ENCODE measurements at regions of chr1 and their contacts with region 1.

Region 1: DNA sequence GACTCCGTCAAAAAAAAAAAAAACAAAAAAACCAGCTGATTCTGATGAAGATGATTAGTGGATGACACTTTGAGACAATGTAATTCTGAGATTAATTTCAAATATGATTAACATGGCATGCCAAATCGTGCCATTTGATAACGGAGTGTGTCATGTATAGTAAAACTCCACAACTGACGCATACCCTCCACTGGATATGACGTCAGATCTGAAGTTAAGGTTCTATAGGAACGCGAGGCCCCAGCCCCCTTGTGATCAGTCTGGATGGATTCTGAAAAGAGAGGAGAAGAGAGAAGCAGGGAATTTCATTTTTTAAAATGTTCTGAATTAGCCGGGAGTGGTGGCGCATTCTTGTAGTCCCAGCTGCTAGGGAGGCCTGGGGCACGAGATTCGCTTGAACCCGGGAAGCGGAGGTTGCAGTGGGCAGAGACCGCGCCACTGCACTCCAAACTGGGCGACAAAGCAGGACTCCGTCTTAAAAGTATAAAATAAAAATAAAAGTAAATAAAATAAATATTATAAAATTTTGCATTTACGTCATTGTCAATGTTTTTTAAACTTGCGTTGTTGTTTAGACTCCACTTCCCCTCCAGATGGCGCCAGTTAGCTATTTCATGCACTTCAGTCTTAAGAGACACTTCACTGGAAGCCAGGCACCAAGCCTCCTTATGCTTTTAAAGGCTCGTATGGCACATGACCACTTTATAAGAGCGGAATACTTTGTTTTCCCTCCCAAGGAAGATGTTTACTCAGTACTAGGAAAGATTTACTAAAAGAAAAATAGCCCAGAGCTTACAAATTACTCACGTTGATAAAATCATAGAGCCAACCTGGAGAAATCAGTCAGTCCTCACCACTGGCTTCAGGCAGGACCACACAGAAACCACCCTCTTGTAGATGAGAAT is 65.5 kb downstream of the UBE2U start:
- DNase-seq: peak in 1 of 2 experiments; percentile 70
- H3K4me3 ChIP-seq: no peak overlapping the region
- H3K27ac ChIP-seq: no peak overlapping the region
- H3K4me1 ChIP-seq: peaks cover 0 to 3% (median 0%) of the 10 kb centered on the region in 4 experiments; a peak in 1 of 7 replicates
- H3K27me3 ChIP-seq: no peaks in the 10 kb centered on the region
- CTCF ChIP-seq: peak in 2 of 3 experiments; percentile 64 to 70; a peak in 3 of 4 replicates
- EP300 ChIP-seq: no peak
- POLR2A ChIP-seq: no peak
- RAD21 ChIP-seq: peak; percentile 95

Region 2: GRCh38 chr1:64212031-64212430 is 56.9 kb before region 1 on chr1:
- CTCF ChIA-PET with region 1: no interaction called
- POLR2A ChIA-PET with region 1: no interaction called
- DNase-seq: no peak
- H3K4me3 ChIP-seq: no peak overlapping the region
- H3K27ac ChIP-seq: no peak overlapping the region
- H3K4me1 ChIP-seq: no peaks in the 10 kb centered on the region
- H3K27me3 ChIP-seq: no peaks in the 10 kb centered on the region
- CTCF ChIP-seq: no peak
- EP300 ChIP-seq: no peak
- POLR2A ChIP-seq: no peak
- RAD21 ChIP-seq: no peak

Region 3: DNA sequence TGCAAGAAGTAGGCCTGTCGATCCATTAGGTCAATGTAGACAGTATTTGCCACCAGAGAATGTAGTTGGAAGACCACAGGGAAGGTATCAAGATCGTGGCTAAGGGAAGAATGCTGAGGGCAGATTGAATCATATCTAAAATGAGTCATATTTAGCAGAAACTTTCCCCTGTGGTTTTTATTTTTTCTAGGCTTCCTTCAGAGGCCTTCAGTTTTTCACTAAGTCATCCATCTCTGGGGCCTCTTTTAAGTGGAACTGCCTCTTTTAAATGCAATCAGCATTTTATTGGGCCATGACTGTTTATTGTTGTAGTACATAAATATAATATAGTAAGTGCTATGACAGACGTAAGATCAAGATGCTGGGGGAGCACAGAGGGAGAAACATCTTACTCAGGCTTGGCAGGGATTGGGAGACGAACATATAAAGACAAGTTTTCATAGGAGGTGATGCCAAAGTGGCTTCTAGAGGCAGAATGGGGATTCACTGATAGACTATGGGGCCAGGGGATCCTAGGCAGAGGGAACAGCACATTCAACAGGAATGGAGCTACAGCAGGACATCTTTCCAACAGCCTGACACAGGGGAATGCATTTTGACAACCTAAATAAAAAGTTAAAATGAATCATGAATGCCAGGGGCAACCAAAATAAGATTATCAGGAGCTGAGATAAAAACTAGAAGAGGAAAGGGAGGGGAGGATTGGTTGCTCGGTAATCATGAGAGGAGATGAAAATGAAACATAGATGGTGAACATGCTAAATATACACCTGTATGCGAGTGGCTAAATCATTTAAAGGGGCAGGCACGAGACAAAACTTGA is 45.4 kb before region 1 on chr1:
- CTCF ChIA-PET with region 1: no interaction called
- POLR2A ChIA-PET with region 1: no interaction called
- DNase-seq: no peak
- H3K4me3 ChIP-seq: no peak overlapping the region
- H3K27ac ChIP-seq: no peak overlapping the region
- H3K4me1 ChIP-seq: no peaks in the 10 kb centered on the region
- H3K27me3 ChIP-seq: no peaks in the 10 kb centered on the region
- CTCF ChIP-seq: no peak
- EP300 ChIP-seq: no peak
- POLR2A ChIP-seq: no peak
- RAD21 ChIP-seq: no peak

Region 4: GRCh38 chr1:64251971-64252370 is 16.9 kb before region 1 on chr1:
- CTCF ChIA-PET with region 1: interaction called, 14 read pairs
- POLR2A ChIA-PET with region 1: no interaction called
- DNase-seq: no peak
- H3K4me3 ChIP-seq: no peak overlapping the region
- H3K27ac ChIP-seq: no peak overlapping the region
- H3K4me1 ChIP-seq: no peaks in the 10 kb centered on the region; a peak in 1 of 7 replicates
- H3K27me3 ChIP-seq: no peaks in the 10 kb centered on the region
- CTCF ChIP-seq: peak in 2 of 3 experiments; percentile 31 to 38; a peak in 3 of 4 replicates
- EP300 ChIP-seq: no peak
- POLR2A ChIP-seq: no peak
- RAD21 ChIP-seq: peak; percentile 15 to 50; a peak in 3 of 4 replicates

Region 5: DNA sequence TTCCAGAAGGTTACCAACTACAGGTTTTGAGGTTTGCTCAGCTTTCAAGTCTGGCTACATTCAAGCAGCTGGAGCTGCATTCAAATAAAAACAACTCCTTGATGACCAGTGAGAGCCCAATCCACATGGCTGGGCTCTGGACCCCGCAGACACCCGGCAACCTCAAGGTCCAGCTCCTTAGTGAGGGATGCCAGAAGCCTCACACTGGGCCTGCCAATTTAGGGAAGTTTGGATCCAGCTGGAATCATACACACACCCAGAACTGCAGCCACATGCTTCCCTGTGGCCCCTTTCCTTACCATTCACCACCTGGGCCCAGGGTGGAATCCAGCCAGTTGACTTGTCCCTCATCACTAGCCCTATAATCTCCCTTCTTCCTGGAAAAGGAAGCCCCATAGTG is 58.2 kb after region 1 on chr1:
- CTCF ChIA-PET with region 1: interaction called, 10 read pairs
- POLR2A ChIA-PET with region 1: no interaction called
- DNase-seq: no peak
- H3K4me3 ChIP-seq: no peak overlapping the region
- H3K27ac ChIP-seq: no peak overlapping the region
- H3K4me1 ChIP-seq: no peaks in the 10 kb centered on the region
- H3K27me3 ChIP-seq: no peaks in the 10 kb centered on the region
- CTCF ChIP-seq: no peak
- EP300 ChIP-seq: no peak
- POLR2A ChIP-seq: no peak
- RAD21 ChIP-seq: no peak